GM12878 (cell line): ENCODE measurements at regions of chr17 and their contacts with region 1.

Region 1: DNA sequence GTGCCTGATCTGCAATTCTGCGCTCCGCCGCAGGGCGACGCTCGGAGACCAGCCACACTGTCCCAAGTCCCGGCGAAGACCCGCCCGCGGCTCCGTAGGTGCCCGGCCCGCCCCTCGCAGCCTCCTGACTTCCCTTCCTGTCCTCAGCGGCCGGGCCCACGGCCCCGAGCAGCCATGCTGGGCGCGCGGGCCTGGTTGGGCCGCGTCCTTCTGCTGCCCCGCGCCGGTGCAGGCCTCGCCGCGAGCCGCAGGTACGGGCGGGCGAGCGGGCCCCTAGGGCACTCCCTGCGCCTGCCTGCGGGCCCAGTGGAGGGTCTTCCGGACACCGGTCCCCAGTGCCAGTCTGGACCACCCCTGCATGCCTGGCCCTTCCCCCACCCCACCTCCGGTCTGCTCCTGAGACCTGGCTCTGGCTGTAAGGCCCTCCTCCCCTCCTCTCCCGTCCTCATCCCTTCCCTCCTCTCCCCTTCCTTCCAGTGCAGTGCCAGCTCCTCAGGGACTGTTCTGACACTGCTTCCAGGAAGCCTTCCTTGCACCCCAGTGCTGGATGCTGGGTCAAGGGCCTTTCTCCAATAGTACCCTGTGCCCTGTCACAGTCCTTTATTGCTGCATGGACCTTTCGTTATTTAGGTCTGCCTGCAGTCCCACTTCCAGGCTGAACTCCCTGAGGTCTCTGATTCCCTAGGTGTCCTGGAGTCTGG is at the start of gene SPATA20:
- DNase-seq: peak; percentile 47
- ATAC-seq: peak; percentile 96
- H3K4me3 ChIP-seq: peak within 1 kb of the TSS; percentile 73
- H3K27ac ChIP-seq: peak within 1 kb of the TSS; percentile 73
- H3K4me1 ChIP-seq: peaks cover 5% of the 10 kb centered on the region
- H3K27me3 ChIP-seq: no peaks in the 10 kb centered on the region
- CTCF ChIP-seq: peak; percentile 98 to 100 (median 100); a peak in 5 of 6 replicates
- EP300 ChIP-seq: no peak
- POLR2A ChIP-seq: peak; percentile 94
- RAD21 ChIP-seq: peak; percentile 93
- polyA plus RNA-seq, gene SPATA20: 2.1 to 3.9 TPM

Region 2: GRCh38 chr17:50675627-50676026 is 128.4 kb after region 1 on chr17:
- CTCF ChIA-PET with region 1: no interaction called
- POLR2A ChIA-PET with region 1: no interaction called
- RAD21 ChIA-PET with region 1: no interaction called
- SMC1A ChIA-PET with region 1: no interaction called
- in situ Hi-C with region 1: no loop called
- intact Hi-C with region 1: no loop called
- DNase-seq: no peak
- ATAC-seq: no peak
- H3K4me3 ChIP-seq: no peak overlapping the region
- H3K27ac ChIP-seq: no peak overlapping the region
- H3K4me1 ChIP-seq: no peaks in the 10 kb centered on the region
- H3K27me3 ChIP-seq: no peaks in the 10 kb centered on the region
- CTCF ChIP-seq: no peak
- EP300 ChIP-seq: no peak
- POLR2A ChIP-seq: no peak
- RAD21 ChIP-seq: no peak

Region 3: DNA sequence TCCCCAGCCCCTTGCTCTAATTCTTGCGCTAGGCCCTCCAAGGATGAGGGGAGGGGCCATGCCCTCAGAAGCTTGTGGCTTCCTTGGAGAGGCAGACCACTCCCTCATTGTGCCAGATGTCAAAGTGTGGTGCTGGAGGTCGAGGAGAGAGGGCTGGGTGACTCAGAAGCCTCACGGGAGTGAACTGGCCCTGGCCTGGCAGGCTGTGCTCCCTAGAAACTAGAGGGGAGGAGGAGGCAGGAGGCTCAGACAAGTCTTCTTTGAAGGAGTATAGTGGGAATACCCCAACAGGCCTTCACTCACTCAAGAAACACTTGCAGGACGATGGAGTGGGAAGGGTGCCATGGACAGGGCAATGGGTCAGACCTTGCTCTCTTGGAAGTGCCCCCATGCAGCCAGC is 142.1 kb after region 1 on chr17:
- CTCF ChIA-PET with region 1: interaction called, 18 read pairs
- POLR2A ChIA-PET with region 1: no interaction called
- RAD21 ChIA-PET with region 1: no interaction called
- SMC1A ChIA-PET with region 1: interaction called, 5 read pairs
- in situ Hi-C with region 1: no loop called
- intact Hi-C with region 1: no loop called
- DNase-seq: no peak
- ATAC-seq: no peak
- H3K4me3 ChIP-seq: no peak overlapping the region
- H3K27ac ChIP-seq: no peak overlapping the region
- H3K4me1 ChIP-seq: no peaks in the 10 kb centered on the region
- H3K27me3 ChIP-seq: no peaks in the 10 kb centered on the region
- CTCF ChIP-seq: no peak
- EP300 ChIP-seq: no peak
- POLR2A ChIP-seq: no peak
- RAD21 ChIP-seq: no peak

Region 4: GRCh38 chr17:50707289-50708049 is 160.3 kb after region 1 on chr17 and contains the start of gene ANKRD40:
- CTCF ChIA-PET with region 1: interaction called, 3 read pairs
- POLR2A ChIA-PET with region 1: interaction called, 4 read pairs
- RAD21 ChIA-PET with region 1: no interaction called
- SMC1A ChIA-PET with region 1: no interaction called
- in situ Hi-C with region 1: no loop called
- intact Hi-C with region 1: loop called (anchors 2 kb)
- DNase-seq: peak; percentile 67
- ATAC-seq: peak; percentile 78
- H3K4me3 ChIP-seq: peak within 1 kb of the TSS; percentile 81
- H3K27ac ChIP-seq: peak within 1 kb of the TSS; percentile 86
- H3K4me1 ChIP-seq: peaks cover 9% of the 10 kb centered on the region
- H3K27me3 ChIP-seq: no peaks in the 10 kb centered on the region
- CTCF ChIP-seq: no peak
- EP300 ChIP-seq: 0 out of 4 replicates have a peak, but pooled peaks of 1 of the 2 experiments have one; percentile 9
- POLR2A ChIP-seq: peak; percentile 80
- RAD21 ChIP-seq: no peak
- polyA plus RNA-seq, gene ANKRD40: 6.7 to 6.9 TPM

Region 5: DNA sequence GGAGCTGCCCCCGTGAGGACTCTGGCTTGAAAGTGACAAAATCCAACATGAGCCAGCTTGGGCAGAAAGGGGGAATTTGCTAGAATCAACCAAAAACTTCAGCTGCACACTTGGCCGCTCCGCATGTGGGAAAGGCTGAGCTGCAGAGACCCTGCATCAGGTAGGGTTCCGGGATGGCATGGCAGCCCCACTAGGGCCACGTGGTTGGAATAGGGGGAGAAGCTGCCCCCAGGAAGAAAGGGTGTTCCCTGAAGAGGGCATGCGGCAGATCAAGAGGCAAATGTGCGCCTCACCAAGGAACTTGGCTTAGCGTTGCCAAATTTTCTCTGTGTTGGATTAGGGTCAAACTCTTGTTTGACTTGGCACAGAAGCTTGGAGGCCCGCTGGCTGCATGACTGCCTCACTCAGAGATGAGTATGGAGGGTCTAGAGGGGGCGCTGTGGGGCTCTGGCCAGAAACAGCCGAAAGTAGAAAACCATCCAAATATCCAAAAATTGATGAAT is 259.0 kb after region 1 on chr17:
- CTCF ChIA-PET with region 1: no interaction called
- POLR2A ChIA-PET with region 1: no interaction called
- RAD21 ChIA-PET with region 1: no interaction called
- SMC1A ChIA-PET with region 1: no interaction called
- in situ Hi-C with region 1: no loop called
- intact Hi-C with region 1: no loop called
- DNase-seq: no peak
- ATAC-seq: no peak
- H3K4me3 ChIP-seq: no peak overlapping the region
- H3K27ac ChIP-seq: no peak overlapping the region
- H3K4me1 ChIP-seq: no peaks in the 10 kb centered on the region
- H3K27me3 ChIP-seq: no peaks in the 10 kb centered on the region
- CTCF ChIP-seq: peak in 1 of 3 experiments; percentile 6; a peak in 1 of 6 replicates
- EP300 ChIP-seq: no peak
- POLR2A ChIP-seq: no peak
- RAD21 ChIP-seq: no peak

Region 6: GRCh38 chr17:50841949-50842354 is 294.8 kb after region 1 on chr17:
- CTCF ChIA-PET with region 1: interaction called, 3 read pairs
- POLR2A ChIA-PET with region 1: no interaction called
- RAD21 ChIA-PET with region 1: no interaction called
- SMC1A ChIA-PET with region 1: no interaction called
- in situ Hi-C with region 1: no loop called
- intact Hi-C with region 1: loop called (anchors 2 kb)
- DNase-seq: no peak
- ATAC-seq: peak; percentile 90
- H3K4me3 ChIP-seq: no peak overlapping the region
- H3K27ac ChIP-seq: no peak overlapping the region
- H3K4me1 ChIP-seq: no peaks in the 10 kb centered on the region
- H3K27me3 ChIP-seq: no peaks in the 10 kb centered on the region; a peak in 2 of 4 replicates
- CTCF ChIP-seq: peak; percentile 74 to 88 (median 83); a peak in 5 of 6 replicates
- EP300 ChIP-seq: no peak
- POLR2A ChIP-seq: no peak
- RAD21 ChIP-seq: peak; percentile 85